Body of pancreas (tissue), 4 donors: ENCODE measurements at regions of chr1 and their contacts with region 1.

Region 1: DNA sequence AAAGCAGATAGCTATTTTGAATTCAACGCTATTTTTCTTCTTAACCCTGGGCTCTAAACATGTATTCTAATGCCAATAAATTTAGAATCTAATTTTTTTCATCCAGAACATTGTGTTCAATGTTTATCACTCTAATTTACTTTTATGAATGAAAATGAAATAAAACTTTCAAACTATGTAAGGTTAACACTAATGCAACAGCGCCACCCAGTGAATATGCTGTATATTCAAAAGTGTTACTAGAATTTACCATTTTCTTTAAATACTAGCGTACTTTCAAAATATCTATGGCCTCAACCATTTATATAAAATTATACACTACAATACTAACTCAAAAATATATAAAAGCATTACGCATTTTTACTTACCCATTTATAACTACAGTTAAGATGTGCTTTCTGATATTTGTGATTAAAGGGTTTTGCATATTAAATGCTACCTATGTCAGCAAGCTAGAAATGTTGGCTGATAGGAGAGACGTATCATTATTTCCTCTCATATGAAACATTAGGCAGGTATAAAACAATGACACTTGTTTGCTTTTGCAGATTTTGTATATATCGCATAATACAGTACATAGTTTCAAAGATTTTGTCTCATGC is 5.9 kb upstream of the NUF2 start:
- DNase-seq: peak; percentile 15 to 22 (median 18)
- ATAC-seq: no peak
- H3K4me3 ChIP-seq: no peak overlapping the region
- H3K27ac ChIP-seq: no peak overlapping the region
- H3K4me1 ChIP-seq: peaks cover 4% of the 10 kb centered on the region
- H3K27me3 ChIP-seq: no peaks in the 10 kb centered on the region
- CTCF ChIP-seq: peak; percentile 11 to 63 (median 56)
- POLR2A ChIP-seq: no peak

Region 2: DNA sequence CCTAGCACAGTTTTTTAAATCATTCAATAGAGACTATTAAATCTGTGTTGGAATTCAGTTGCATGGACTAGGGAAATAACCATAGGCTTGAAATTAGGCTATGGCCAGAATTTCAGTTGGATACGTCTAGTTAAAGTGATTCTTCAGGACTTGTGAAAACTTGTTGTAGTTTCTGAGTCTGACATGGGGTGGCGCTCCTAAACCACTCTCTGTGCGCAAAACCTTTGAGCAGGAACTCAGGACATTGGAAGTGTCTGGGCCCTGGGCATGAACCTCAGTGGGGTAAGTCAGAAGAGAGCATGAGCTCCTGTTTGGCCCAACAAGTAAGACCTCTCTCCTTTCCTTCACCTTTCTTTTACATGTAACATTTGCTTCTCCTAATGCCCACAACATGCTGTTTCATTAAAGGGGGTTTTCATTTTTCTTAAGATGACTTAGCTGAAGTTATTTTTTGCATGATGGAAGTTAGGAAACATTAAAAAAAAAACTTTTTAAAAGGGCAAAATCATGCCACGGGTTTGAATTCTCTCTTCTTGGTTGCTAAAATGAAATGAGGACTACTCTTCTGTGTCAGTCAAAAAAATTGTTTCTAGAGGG is 437.8 kb before region 1 on chr1:
- intact Hi-C with region 1: loop called (anchors 10 kb)
- DNase-seq: peak; percentile 52 to 66 (median 61)
- ATAC-seq: peak; percentile 30
- H3K4me3 ChIP-seq: no peak overlapping the region
- H3K27ac ChIP-seq: no peak overlapping the region
- H3K4me1 ChIP-seq: peaks cover 17% of the 10 kb centered on the region
- H3K27me3 ChIP-seq: no peaks in the 10 kb centered on the region
- CTCF ChIP-seq: peak in 6 of 7 experiments; percentile 37 to 73 (median 64)
- POLR2A ChIP-seq: no peak

Region 3: DNA sequence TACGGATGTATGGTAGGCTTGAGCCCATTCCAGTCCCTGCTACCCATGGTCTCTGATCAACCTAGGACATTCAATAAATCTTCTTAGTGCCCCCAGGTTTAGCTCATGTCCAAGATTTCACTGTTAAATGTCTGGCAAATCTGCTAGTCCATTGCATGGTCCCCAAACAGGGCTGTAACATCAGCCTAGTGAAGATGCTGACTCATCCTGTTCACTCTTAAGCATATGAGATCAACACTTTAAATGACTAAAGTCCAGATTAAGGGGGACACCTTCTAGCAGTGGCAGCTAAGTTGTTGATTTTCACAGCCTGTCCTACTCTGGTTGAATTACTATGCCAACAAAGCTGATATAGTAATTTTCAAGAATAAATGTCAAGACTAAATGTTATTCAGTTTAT is 40.7 kb before region 1 on chr1:
- intact Hi-C with region 1: no loop called
- DNase-seq: no peak
- ATAC-seq: no peak
- H3K4me3 ChIP-seq: no peak overlapping the region
- H3K27ac ChIP-seq: no peak overlapping the region
- H3K4me1 ChIP-seq: no peaks in the 10 kb centered on the region
- H3K27me3 ChIP-seq: no peaks in the 10 kb centered on the region
- CTCF ChIP-seq: no peak
- POLR2A ChIP-seq: no peak